HCT116 (cell line): ENCODE measurements at regions of chr14 and their contacts with region 1.

Region 1: DNA sequence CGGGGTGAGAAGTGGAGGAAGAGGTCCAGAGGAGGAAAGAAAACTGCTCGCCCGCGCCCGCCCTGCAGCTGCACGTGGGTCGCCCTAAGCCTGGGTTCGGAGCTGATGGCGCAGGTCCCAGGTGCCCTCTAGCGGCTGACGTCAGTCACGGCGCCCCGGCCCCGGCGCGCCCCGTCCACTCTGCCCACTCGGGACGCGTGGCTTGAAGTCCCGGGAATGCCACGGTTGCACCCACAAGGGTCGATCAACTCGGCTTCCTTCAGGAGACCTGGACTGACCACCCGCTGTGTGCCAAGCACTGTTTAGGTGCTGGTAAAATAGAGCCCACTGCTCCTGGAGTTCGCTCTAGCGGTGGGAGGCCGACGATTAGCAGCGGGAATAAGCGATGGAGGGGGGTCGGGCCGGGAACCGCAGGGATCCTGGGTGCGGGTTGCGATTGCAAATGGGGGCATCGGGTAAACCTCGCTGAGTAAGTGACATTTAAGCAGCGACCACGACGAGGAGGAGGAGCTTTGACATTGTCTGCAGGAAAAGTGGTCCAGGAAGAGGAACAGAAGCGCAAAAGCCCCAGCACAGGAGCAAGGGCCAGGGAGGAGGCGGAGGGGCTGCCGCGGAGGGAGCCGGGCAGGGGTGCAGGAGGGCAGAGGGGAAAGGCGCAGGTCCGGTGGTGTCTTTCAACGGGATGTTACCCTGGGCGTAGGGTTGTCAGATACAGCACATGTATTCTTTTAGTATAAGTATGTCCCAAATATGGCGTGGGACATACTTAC is 5.1 kb upstream of the ZNF839 start:
- DNase-seq: peak; percentile 57
- ATAC-seq: peak; percentile 62
- H3K4me3 ChIP-seq: peak overlapping the region; percentile 39 to 65
- H3K27ac ChIP-seq: no peak overlapping the region
- H3K4me1 ChIP-seq: peaks cover 30 to 53% of the 10 kb centered on the region in 2 experiments
- H3K27me3 ChIP-seq: no peaks in the 10 kb centered on the region
- CTCF ChIP-seq: peak in 2 of 3 experiments; percentile 74 to 97; a peak in 4 of 6 replicates
- POLR2A ChIP-seq: no peak
- RAD21 ChIP-seq: no peak

Region 2: GRCh38 chr14:102046343-102047278 is 267.8 kb before region 1 on chr14:
- CTCF ChIA-PET with region 1: interaction called, 6 read pairs
- POLR2A ChIA-PET with region 1: no interaction called
- RAD21 ChIA-PET with region 1: interaction called in 1 of 2 experiments, 6 read pairs
- intact Hi-C with region 1: loop called (anchors 2 kb)
- DNase-seq: peak; percentile 82
- ATAC-seq: peak; percentile 99
- H3K4me3 ChIP-seq: no peak overlapping the region
- H3K27ac ChIP-seq: peak overlapping the region; percentile 29
- H3K4me1 ChIP-seq: peaks cover 0 to 10% of the 10 kb centered on the region in 2 experiments; a peak in 2 of 4 replicates
- H3K27me3 ChIP-seq: no peaks in the 10 kb centered on the region
- CTCF ChIP-seq: peak; percentile 78 to 99 (median 80)
- POLR2A ChIP-seq: no peak
- RAD21 ChIP-seq: peak; percentile 94

Region 3: DNA sequence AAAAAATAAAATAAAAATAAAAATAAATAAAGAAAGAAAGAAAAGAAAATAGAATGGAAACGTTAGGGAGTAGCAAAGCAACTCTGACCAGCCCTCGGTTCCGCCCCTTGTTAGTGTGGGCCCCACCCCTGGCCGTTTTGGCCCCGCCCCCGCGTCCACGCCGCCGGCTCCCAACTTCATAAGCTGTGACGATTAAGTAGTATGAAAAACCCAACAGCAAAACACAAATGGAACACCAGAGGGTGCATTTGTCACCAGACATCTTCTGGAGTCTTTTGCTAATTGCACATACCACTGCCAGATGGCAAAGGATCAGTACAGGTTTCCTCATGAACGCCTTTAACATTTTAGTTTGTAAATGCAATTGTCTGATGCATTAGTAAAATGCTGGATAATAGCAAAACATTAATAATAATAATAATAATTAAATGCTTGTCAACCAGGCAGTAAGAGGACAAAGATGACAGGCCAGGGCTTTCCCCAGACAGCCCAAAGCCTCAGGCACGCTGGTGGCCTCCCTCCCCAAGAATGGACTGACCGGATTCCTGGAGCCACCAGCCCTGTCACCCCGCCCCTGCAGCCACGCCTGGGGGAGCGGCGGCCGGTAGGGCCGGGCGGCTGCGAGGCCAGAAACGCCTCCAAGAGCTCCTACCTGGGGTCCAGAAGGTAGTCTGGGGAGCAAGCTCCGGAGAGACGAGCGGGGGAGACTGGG is 251.2 kb before region 1 on chr14:
- CTCF ChIA-PET with region 1: interaction called, 3 read pairs
- POLR2A ChIA-PET with region 1: no interaction called
- RAD21 ChIA-PET with region 1: interaction called in 1 of 2 experiments, 3 read pairs
- intact Hi-C with region 1: loop called (anchors 1 kb)
- DNase-seq: peak; percentile 91
- ATAC-seq: peak; percentile 95
- H3K4me3 ChIP-seq: peak overlapping the region; percentile 6 to 34; a peak in 3 of 4 replicates
- H3K27ac ChIP-seq: peak overlapping the region; percentile 70
- H3K4me1 ChIP-seq: peaks cover 12 to 17% of the 10 kb centered on the region in 2 experiments
- H3K27me3 ChIP-seq: no peaks in the 10 kb centered on the region
- CTCF ChIP-seq: peak; percentile 57 to 88 (median 65)
- POLR2A ChIP-seq: no peak
- RAD21 ChIP-seq: peak; percentile 88

Region 4: GRCh38 chr14:102096214-102097114 is 218.0 kb before region 1 on chr14:
- CTCF ChIA-PET with region 1: interaction called, 13 read pairs
- POLR2A ChIA-PET with region 1: no interaction called
- RAD21 ChIA-PET with region 1: interaction called in 1 of 2 experiments, 3 read pairs
- intact Hi-C with region 1: loop called (anchors 1 kb)
- DNase-seq: peak; percentile 50
- ATAC-seq: peak; percentile 86
- H3K4me3 ChIP-seq: no peak overlapping the region
- H3K27ac ChIP-seq: no peak overlapping the region
- H3K4me1 ChIP-seq: peaks cover 26 to 32% of the 10 kb centered on the region in 2 experiments
- H3K27me3 ChIP-seq: no peaks in the 10 kb centered on the region
- CTCF ChIP-seq: peak; percentile 73 to 96 (median 85)
- POLR2A ChIP-seq: no peak
- RAD21 ChIP-seq: peak; percentile 96

Region 5: DNA sequence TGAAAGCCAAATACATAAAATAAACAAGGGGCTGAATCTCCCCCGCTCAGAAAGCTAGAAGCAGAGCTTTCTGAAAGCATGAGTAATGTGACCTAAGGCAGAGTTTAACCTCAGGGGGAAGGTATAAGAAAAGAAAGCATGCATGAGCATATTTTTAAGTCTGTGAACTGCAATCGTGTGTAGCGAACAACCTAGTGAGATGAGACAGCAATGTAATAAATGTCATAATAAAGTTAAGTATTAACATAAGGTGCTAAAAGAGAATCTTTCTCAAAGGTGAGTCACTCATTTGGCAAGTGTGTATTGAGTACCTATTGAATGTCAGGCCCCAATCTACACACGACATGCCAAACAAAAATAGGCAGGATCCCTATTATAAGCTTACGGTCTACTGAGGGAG is 188.9 kb before region 1 on chr14:
- CTCF ChIA-PET with region 1: no interaction called
- POLR2A ChIA-PET with region 1: no interaction called
- RAD21 ChIA-PET with region 1: no interaction called
- intact Hi-C with region 1: no loop called
- DNase-seq: no peak
- ATAC-seq: no peak
- H3K4me3 ChIP-seq: no peak overlapping the region
- H3K27ac ChIP-seq: no peak overlapping the region
- H3K4me1 ChIP-seq: peaks cover 0 to 3% of the 10 kb centered on the region in 2 experiments; a peak in 1 of 4 replicates
- H3K27me3 ChIP-seq: no peaks in the 10 kb centered on the region
- CTCF ChIP-seq: no peak
- POLR2A ChIP-seq: no peak
- RAD21 ChIP-seq: no peak

Region 6: GRCh38 chr14:102139248-102140026 is 175.0 kb before region 1 on chr14 and contains the start of gene WDR20:
- CTCF ChIA-PET with region 1: no interaction called
- POLR2A ChIA-PET with region 1: no interaction called
- RAD21 ChIA-PET with region 1: no interaction called
- intact Hi-C with region 1: loop called (anchors 2 kb)
- DNase-seq: peak; percentile 94
- ATAC-seq: peak; percentile 92
- H3K4me3 ChIP-seq: peak within 1 kb of the TSS; percentile 91 to 97
- H3K27ac ChIP-seq: peak within 1 kb of the TSS; percentile 76
- H3K4me1 ChIP-seq: peaks cover 5 to 16% of the 10 kb centered on the region in 2 experiments; a peak in 3 of 4 replicates
- H3K27me3 ChIP-seq: no peaks in the 10 kb centered on the region
- CTCF ChIP-seq: 0 out of 6 replicates have a peak, but pooled peaks of 1 of the 3 experiments have one; percentile 17
- POLR2A ChIP-seq: peak; percentile 64
- RAD21 ChIP-seq: no peak; the same call in 1 of the 2 replicates
- total RNA-seq, gene WDR20: 21.1 TPM

Region 7: DNA sequence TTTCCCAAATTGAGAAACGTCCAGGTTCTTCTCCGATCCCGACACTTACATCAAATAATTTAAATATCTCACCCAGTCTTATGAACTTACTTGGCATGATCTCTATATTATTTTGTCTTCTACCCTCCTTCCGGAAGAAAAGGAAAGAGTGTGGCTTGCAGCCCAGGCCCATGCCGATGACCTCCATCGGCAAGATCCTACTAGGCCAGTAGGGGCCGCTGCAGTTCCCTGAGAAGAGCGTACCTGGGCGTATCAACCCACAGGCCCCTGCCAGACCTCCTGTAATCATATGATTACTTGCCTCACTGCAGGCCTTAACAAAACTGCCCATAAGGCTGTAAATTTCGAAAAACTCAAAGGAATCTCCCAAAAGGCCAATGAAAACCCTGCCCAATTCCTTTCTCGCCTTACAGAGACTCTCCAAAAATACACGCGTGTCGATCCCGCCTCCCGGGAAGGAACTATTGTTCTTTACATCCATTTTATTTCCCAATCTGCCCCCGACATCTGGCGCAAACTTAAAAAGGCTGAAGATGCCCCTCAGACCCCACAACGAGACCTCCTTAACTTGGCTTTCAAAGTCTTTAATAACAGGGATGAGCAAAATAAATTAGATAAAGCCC is 79.0 kb before region 1 on chr14:
- CTCF ChIA-PET with region 1: interaction called, 5 read pairs
- POLR2A ChIA-PET with region 1: no interaction called
- RAD21 ChIA-PET with region 1: interaction called in 1 of 2 experiments, 3 read pairs
- intact Hi-C with region 1: loop called (anchors 1 kb)
- DNase-seq: peak; percentile 52
- ATAC-seq: peak; percentile 100
- H3K4me3 ChIP-seq: no peak overlapping the region
- H3K27ac ChIP-seq: no peak overlapping the region
- H3K4me1 ChIP-seq: peaks cover 0 to 9% of the 10 kb centered on the region in 2 experiments; a peak in 2 of 4 replicates
- H3K27me3 ChIP-seq: no peaks in the 10 kb centered on the region
- CTCF ChIP-seq: peak; percentile 84 to 94 (median 89)
- POLR2A ChIP-seq: no peak
- RAD21 ChIP-seq: peak; percentile 95

Region 8: GRCh38 chr14:102272392-102272791 is 42.0 kb before region 1 on chr14:
- CTCF ChIA-PET with region 1: no interaction called
- POLR2A ChIA-PET with region 1: no interaction called
- RAD21 ChIA-PET with region 1: no interaction called
- intact Hi-C with region 1: no loop called
- DNase-seq: no peak
- ATAC-seq: no peak
- H3K4me3 ChIP-seq: no peak overlapping the region
- H3K27ac ChIP-seq: no peak overlapping the region
- H3K4me1 ChIP-seq: peaks cover 5 to 10% of the 10 kb centered on the region in 2 experiments
- H3K27me3 ChIP-seq: no peaks in the 10 kb centered on the region
- CTCF ChIP-seq: no peak
- POLR2A ChIP-seq: no peak
- RAD21 ChIP-seq: no peak

Region 9: GRCh38 chr14:102325791-102326345 is 11.4 kb after region 1 on chr14:
- CTCF ChIA-PET with region 1: no interaction called
- POLR2A ChIA-PET with region 1: no interaction called
- RAD21 ChIA-PET with region 1: no interaction called
- intact Hi-C with region 1: no loop called
- DNase-seq: no peak
- ATAC-seq: no peak
- H3K4me3 ChIP-seq: no peak overlapping the region
- H3K27ac ChIP-seq: no peak overlapping the region
- H3K4me1 ChIP-seq: peaks cover 3 to 15% of the 10 kb centered on the region in 2 experiments; a peak in 3 of 4 replicates
- H3K27me3 ChIP-seq: no peaks in the 10 kb centered on the region
- CTCF ChIP-seq: no peak
- POLR2A ChIP-seq: no peak
- RAD21 ChIP-seq: no peak